Esophagus squamous epithelium (tissue), 5 donors: ENCODE measurements at regions of chr11 and their contacts with region 1.

Region 1: GRCh38 chr11:115334932-115335788 is 169.1 kb downstream of the CADM1 start:
- DNase-seq: no peak
- H3K4me3 ChIP-seq: no peak overlapping the region
- H3K27ac ChIP-seq: no peak overlapping the region
- H3K4me1 ChIP-seq: no peaks in the 10 kb centered on the region
- H3K27me3 ChIP-seq: no peaks in the 10 kb centered on the region
- CTCF ChIP-seq: peak; percentile 40 to 72 (median 70)
- POLR2A ChIP-seq: no peak

Region 2: DNA sequence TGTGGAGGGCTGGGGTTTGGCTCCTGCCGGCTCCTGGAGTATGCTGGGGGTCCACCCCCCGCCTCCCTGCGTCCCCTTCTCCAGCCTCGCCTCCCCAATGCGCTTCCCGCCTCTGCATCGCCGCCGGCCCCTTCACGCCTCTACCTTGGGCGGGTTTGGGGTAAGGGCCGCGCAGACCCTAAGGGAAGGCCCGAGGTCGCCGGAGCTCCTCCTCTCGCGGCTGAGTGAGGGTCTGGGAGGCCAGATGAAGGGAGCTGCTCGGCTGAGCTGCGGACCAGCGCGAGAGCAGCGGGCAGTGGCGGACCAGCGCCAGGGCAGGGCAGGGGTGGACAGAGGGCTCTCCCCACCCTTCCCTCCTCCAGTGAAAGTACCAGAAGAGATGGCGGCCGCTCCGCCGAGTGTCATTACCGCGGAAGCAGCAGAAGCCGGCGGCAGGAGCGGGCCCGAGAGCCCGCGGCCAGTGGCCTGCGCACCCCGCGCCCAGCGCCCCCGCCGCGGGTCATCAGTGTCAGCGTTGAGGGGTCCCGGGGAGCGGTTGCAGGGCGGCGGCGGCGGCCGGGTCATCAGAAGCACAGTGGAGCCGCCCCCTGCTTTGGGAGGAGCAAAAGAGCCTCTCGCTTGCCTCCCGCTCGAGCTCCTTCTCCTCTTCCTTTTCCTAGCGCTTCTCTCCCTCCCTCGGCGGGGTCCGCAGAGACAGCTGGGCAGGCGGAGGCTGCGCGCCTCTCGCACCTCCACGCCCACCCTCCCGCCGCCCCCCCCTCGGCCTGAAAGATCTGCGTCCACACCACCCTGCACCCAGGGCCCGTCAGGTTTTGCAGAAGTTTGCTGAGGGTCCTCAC is 424.7 kb after region 1 on chr11:
- intact Hi-C with region 1: no loop called
- DNase-seq: no peak
- H3K4me3 ChIP-seq: peak overlapping the region; percentile 53 to 92 (median 68)
- H3K27ac ChIP-seq: peak overlapping the region; percentile 53 to 81 (median 64)
- H3K4me1 ChIP-seq: peaks cover 25 to 42% (median 30%) of the 10 kb centered on the region in 3 donors
- H3K27me3 ChIP-seq: peaks cover 0 to 9% (median 0%) of the 10 kb centered on the region in 4 donors
- CTCF ChIP-seq: no peak
- POLR2A ChIP-seq: no peak

Region 3: GRCh38 chr11:116224154-116224888 is 889.2 kb after region 1 on chr11:
- intact Hi-C with region 1: loop called (anchors 5 kb)
- DNase-seq: no peak
- H3K4me3 ChIP-seq: no peak overlapping the region
- H3K27ac ChIP-seq: no peak overlapping the region
- H3K4me1 ChIP-seq: peaks cover 0 to 2% (median 0%) of the 10 kb centered on the region in 3 donors
- H3K27me3 ChIP-seq: peaks cover 0 to 16% (median 0%) of the 10 kb centered on the region in 4 donors
- CTCF ChIP-seq: peak; percentile 16 to 67 (median 42)
- POLR2A ChIP-seq: no peak

Region 4: DNA sequence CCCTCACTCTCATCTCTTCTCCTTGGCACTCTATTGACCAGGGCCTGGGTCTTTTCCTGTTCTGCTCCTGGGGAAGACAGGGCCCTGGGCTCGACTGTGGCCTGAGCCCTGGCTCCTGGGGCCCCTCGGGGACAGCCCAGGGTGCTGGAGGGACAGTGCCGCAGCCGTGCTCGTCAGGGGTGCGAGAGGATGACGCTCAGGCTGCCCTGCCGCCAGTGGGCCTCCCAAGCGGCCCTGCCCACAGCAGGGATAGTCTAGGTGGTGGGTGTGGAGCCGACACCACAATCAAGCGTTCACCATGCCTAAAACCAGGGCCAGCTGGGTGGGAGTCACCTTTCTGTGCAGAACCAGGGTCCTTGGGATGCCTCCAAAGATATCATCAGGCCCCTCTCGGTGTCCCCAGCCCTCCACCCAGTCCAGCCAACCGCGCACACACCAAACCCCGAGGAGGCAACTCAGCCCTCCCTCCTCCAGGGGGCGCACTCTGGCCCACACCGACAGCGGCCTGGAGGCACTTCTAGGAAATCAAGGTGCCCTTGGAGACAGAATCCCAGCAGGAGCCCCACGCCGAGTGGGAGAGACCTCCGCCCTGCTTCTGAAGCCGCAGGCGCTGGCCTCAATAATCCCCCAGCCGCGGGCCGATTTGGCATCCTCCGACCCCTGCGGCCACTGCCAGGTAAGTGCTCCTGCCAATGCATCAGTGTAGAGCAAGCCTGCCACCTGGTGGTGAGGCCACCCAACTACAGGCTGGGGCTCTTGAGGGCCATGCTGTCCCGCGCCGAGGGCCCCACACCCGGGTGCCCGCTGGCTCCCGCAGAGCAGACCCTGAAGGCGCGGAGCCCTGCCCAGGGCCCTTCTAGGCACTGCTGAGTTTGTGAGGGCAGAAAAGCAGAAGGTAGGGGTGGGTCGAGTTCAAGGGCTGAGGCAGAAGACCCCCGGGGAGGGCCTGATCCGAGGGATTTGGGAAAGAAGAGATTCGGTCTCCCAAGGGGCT is 941.2 kb after region 1 on chr11:
- intact Hi-C with region 1: loop called (anchors 5 kb)
- DNase-seq: no peak
- H3K4me3 ChIP-seq: peak overlapping the region in 2 of 4 donors; percentile 13 to 58
- H3K27ac ChIP-seq: no peak overlapping the region
- H3K4me1 ChIP-seq: peaks cover 0 to 8% (median 3%) of the 10 kb centered on the region in 3 donors
- H3K27me3 ChIP-seq: peaks cover 0 to 27% (median 0%) of the 10 kb centered on the region in 4 donors
- CTCF ChIP-seq: peak; percentile 68 to 98 (median 89)
- POLR2A ChIP-seq: no peak